ENCODE measurements at regions of chr3 and their contacts with region 1.

Region 1: DNA sequence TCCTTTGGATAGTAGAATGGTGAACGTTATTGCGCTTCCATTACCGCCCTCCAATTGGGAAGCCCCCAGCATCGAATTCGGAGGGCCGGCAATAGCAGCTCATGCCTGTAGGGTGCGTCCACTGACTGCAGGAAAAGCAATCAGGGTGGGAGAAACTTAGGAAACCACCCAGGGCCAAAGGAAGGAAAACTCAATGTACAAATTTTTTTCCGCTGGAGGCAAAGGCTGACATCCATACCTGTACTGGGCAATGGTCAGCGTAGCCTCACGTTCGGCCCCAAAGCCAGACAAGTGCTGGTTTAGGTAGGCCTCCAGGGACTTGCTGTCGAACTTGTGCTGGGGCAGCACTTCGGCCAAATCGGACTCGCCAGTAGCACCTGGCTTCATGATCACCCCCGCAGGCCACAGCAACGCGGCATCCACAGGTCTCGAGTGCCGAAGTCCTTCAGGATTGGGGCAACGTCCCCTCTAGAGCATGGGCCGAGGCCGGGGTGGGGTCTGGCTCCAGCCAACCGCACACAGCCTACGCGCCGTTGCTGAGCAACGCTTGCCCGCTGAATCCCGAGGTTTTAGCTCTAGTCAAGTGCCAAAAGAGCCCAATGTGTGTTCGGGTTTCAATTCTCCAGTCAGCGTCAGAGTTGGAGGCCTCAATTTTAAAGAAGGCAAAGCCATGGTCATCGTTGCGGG is at the start of gene ACAD11:
- DNase-seq: peak; percentile 64
- H3K4me3 Mint-ChIP-seq: peak within 1 kb of the TSS; percentile 95
- H3K27ac Mint-ChIP-seq: peak within 1 kb of the TSS; percentile 94
- H3K4me1 Mint-ChIP-seq: peaks cover 44% of the 10 kb centered on the region
- H3K27me3 Mint-ChIP-seq: no peaks in the 10 kb centered on the region
- total RNA-seq, gene ACAD11: 11.2 to 11.4 TPM

Region 2: GRCh38 chr3:131502530-131503245 is 1156.8 kb before region 1 on chr3 and contains the start of gene MRPL3:
- CTCF ChIA-PET with region 1: no interaction called
- intact Hi-C with region 1: loop called (anchors 5 kb)
- DNase-seq: peak; percentile 90
- H3K4me3 Mint-ChIP-seq: peak within 1 kb of the TSS; percentile 91
- H3K27ac Mint-ChIP-seq: peak within 1 kb of the TSS; percentile 88
- H3K4me1 Mint-ChIP-seq: peaks cover 37% of the 10 kb centered on the region
- H3K27me3 Mint-ChIP-seq: no peaks in the 10 kb centered on the region
- total RNA-seq, gene MRPL3: 151 to 161 TPM

Region 3: GRCh38 chr3:132352541-132353143 is 306.9 kb before region 1 on chr3:
- CTCF ChIA-PET with region 1: no interaction called
- intact Hi-C with region 1: loop called (anchors 5 kb)
- DNase-seq: peak; percentile 84
- H3K4me3 Mint-ChIP-seq: no peak overlapping the region
- H3K27ac Mint-ChIP-seq: no peak overlapping the region
- H3K4me1 Mint-ChIP-seq: peaks cover 2% of the 10 kb centered on the region
- H3K27me3 Mint-ChIP-seq: no peaks in the 10 kb centered on the region

Region 4: DNA sequence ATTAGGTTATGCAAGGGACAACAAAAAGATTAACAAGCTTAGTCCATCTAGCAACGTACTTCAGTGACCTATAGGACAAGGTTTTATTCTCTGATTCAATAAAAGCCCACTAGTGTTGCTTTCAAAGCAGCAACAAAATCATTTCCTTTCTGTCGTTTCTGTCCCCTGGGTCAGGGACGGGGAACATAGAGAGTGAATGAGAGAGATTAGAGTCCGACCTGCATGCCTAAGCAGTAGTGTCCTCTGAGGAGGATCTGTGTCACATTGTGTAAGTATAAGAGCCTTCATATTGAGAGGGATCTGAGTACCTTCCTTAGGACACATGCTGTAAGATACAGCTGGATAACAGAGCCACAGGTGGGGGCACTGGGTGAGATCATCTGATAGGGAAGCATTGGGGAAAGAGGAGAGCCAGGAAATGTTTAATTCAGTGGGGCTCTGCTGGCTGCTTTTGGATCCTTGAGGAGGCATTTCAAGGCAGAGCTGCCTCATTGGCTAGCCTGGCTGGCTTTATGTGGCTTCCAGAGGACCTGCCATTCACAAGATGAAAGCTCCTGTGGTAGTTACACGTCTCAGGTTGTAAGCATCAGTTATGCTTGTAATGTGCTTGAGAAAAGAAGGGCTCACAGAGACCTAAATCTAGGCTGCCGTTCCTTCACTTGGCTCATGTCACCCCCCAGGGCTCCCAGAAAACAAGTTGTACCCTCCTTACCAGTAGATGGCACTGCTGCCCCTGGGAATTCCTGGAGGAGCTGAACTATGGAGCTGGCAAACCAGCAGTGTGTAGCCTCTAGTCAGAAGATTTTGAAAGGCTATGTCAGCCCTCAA is 381.4 kb after region 1 on chr3:
- CTCF ChIA-PET with region 1: no interaction called
- intact Hi-C with region 1: loop called (anchors 10 kb)
- DNase-seq: peak; percentile 63
- H3K4me3 Mint-ChIP-seq: no peak overlapping the region
- H3K27ac Mint-ChIP-seq: no peak overlapping the region
- H3K4me1 Mint-ChIP-seq: no peaks in the 10 kb centered on the region
- H3K27me3 Mint-ChIP-seq: peaks cover 40% of the 10 kb centered on the region

Region 5: DNA sequence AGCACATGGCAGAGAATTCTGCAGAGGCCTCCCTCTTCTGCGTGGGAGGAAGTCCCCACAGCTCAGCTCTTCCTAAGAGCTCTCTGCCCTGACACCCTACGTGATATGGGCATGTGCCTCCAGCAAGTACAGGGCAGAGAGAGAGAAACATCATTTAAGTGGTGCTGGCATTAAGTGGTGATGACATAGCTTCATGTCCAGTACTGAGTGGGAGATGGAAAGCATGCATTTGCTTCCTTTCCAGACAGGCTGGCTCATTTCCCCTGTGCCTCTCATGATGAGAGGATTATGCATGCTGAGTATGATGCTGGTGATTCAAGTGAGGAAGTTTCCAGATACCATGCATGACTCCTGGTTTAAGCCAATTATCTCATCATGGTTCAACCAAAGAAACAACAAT is 767.2 kb after region 1 on chr3:
- CTCF ChIA-PET with region 1: no interaction called
- intact Hi-C with region 1: loop called (anchors 10 kb)
- DNase-seq: no peak
- H3K4me3 Mint-ChIP-seq: no peak overlapping the region
- H3K27ac Mint-ChIP-seq: no peak overlapping the region
- H3K4me1 Mint-ChIP-seq: peaks cover 4% of the 10 kb centered on the region
- H3K27me3 Mint-ChIP-seq: no peaks in the 10 kb centered on the region

Region 6: GRCh38 chr3:133661454-133662277 is 1002.2 kb after region 1 on chr3 and contains the start of gene TOPBP1:
- CTCF ChIA-PET with region 1: no interaction called
- intact Hi-C with region 1: loop called (anchors 1 kb)
- DNase-seq: peak; percentile 94
- H3K4me3 Mint-ChIP-seq: peak within 1 kb of the TSS; percentile 98
- H3K27ac Mint-ChIP-seq: peak within 1 kb of the TSS; percentile 98
- H3K4me1 Mint-ChIP-seq: peaks cover 28% of the 10 kb centered on the region
- H3K27me3 Mint-ChIP-seq: no peaks in the 10 kb centered on the region
- total RNA-seq, gene TOPBP1: 65.4 to 65.8 TPM